RWPE1 (cell line): ENCODE measurements at regions of chr17 and their contacts with region 1.

Region 1: GRCh38 chr17:46106966-46107644 is 86.1 kb downstream of the KANSL1 start:
- DNase-seq: no peak
- H3K27ac ChIP-seq: no peak overlapping the region
- CTCF ChIP-seq: no peak

Region 2: GRCh38 chr17:44747566-44747965 is 1359.5 kb before region 1 on chr17:
- CTCF ChIA-PET with region 1: no interaction called
- POLR2A ChIA-PET with region 1: interaction called, 19 read pairs
- DNase-seq: no peak
- H3K27ac ChIP-seq: peak overlapping the region; percentile 15; the same call in 1 of the 2 replicates
- CTCF ChIP-seq: no peak